ENCODE measurements at regions of chr13 and their contacts with region 1.

Region 1: DNA sequence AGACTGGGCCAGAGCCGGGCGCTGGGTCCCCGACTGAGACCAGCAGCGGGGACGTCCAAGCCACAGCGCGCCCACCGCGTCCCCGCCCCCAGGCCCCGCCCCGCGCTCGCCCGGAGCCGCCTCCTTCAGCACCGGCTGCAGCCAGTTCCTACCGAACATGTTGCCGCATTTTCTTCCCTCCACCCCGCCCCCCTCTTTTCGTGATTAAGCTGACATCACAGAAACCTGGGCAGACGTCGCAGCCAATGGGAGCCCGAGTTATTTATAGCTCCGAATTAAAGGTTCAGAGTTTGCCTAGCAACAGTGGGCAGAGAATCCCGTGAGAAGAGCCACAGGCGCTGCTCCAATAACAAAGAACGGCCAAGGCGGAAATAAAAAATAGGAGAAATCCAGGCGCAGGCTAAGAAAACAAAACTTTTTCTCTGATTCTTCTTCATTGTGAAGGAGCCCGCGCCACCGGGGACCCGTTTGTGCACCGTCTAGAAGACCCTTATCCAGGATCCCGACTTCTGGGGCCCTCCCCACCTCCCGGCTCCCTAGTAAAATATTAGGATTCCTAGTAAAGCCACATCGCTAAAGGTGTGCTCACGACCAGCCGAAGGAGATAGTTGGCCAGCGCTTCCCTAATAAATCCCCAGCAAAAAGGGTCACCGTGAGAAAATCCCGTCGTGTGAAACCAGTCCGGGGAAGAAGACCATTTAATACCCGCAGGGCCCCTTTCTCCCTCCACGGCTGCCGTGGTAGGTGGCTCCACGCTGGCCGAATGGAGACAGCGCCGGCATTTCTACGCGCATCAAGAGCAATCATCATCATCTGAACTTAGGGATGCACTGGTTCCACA is 61.7 kb downstream of the SERP2 start:
- DNase-seq: peak; percentile 93
- ATAC-seq: peak; percentile 41
- H3K4me3 ChIP-seq: peak overlapping the region; percentile 100
- H3K27ac ChIP-seq: peak overlapping the region; percentile 90
- H3K4me1 ChIP-seq: peaks cover 22% of the 10 kb centered on the region
- H3K27me3 ChIP-seq: no peaks in the 10 kb centered on the region
- CTCF ChIP-seq: no peak

Region 2: GRCh38 chr13:44141725-44142539 is 293.4 kb before region 1 on chr13:
- CTCF ChIA-PET with region 1: interaction called, 6 read pairs
- POLR2A ChIA-PET with region 1: interaction called, 5 read pairs
- intact Hi-C with region 1: loop called (anchors 2 kb)
- DNase-seq: peak; percentile 93
- ATAC-seq: peak; percentile 95
- H3K4me3 ChIP-seq: peak overlapping the region; percentile 75
- H3K27ac ChIP-seq: peak overlapping the region; percentile 84
- H3K4me1 ChIP-seq: peaks cover 29% of the 10 kb centered on the region
- H3K27me3 ChIP-seq: no peaks in the 10 kb centered on the region
- CTCF ChIP-seq: no peak

Region 3: DNA sequence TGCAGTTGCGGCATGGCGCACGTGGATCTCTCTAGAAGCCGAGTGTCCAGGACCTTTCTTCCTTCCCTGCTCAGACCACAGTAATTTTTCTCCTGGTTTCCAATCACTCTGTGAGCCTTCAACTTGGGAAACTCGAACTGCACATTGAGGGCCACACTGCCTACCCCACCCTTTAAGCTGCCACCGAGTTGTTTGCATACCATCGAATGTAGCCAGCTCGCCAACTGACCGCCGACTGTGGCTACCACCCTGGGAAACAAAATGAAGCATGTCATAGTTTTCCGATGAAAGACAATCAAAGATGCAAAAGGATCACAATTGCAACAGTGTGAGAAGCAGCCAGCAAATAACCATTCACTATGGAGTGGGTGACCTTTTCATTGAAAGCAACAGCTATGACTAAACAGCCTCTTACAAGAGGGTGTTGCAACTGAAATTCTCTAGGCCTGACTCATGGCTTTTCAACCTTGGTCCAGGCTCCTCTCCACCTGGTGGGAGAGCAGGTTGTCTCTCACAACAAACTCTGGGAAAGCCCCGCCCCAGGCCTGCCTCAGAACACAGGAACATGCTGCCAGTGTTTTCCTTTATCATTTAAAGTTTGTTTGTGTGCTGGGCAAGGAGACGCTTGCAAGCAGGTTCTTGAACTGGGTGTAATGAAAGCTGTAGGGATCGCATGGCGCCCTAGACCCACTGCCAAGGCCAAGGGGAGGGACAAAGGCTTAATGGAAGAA is 203.4 kb before region 1 on chr13:
- CTCF ChIA-PET with region 1: no interaction called
- POLR2A ChIA-PET with region 1: interaction called, 11 read pairs
- intact Hi-C with region 1: loop called (anchors 1 kb)
- DNase-seq: peak; percentile 97
- ATAC-seq: peak; percentile 84
- H3K4me3 ChIP-seq: no peak overlapping the region
- H3K27ac ChIP-seq: peak overlapping the region; percentile 100
- H3K4me1 ChIP-seq: peaks cover 42% of the 10 kb centered on the region
- H3K27me3 ChIP-seq: no peaks in the 10 kb centered on the region
- CTCF ChIP-seq: no peak

Region 4: DNA sequence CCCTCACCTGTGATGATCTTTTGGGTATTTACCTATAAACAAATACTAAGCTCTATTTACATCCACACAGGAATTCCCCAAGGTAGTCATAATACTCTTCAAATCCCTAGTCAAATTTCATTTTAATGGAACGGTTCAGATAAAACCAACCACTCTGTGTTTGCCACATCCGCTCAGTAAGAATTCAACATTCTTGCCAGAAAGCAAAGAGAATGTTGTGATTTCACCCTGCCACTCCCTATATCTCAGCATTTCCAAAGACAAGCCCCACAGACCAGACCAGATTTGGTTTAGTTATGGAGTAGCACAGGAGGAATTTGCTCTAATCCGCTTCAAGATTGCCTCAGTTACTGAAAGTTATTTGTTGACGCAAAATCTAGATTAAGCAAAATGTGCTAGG is 167.4 kb before region 1 on chr13:
- CTCF ChIA-PET with region 1: interaction called, 4 read pairs
- POLR2A ChIA-PET with region 1: interaction called, 22 read pairs
- intact Hi-C with region 1: no loop called
- DNase-seq: peak; percentile 91
- ATAC-seq: peak; percentile 83
- H3K4me3 ChIP-seq: no peak overlapping the region
- H3K27ac ChIP-seq: peak overlapping the region; percentile 95
- H3K4me1 ChIP-seq: peaks cover 43% of the 10 kb centered on the region
- H3K27me3 ChIP-seq: no peaks in the 10 kb centered on the region
- CTCF ChIP-seq: no peak

Region 5: DNA sequence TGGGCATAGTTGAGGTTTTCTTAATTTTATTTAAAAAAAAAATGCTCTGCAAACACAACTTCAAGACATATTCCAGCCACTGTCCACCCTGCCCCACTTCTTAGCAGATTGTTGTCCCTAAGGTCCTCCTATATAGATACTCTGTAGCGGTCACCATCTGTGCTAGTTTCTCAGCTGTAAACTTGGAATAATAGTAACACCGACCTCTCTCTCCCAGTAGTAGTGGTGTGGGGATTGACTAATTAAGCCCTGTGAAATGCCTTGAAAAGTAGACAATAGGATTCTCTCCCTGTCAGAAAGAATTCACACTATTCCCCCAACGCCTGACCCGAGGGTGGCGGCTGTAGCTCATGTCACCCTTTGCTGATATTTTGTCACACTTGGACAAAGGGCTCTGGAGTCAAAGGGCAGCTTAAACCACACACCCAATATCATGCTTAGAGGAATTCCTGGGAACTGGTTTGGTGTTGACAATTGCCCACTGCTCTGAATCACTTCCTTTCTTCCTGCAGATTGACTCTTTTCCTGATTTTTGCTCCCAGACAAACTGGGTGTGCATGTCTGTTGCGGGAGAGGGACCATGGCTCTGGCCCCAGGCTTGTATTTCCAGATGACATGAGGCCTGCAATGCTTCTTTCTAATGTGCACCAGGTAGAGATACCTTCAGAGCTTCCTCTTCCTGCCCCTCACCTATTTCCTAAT is 70.9 kb before region 1 on chr13:
- CTCF ChIA-PET with region 1: interaction called, 3 read pairs
- POLR2A ChIA-PET with region 1: interaction called, 21 read pairs
- intact Hi-C with region 1: loop called (anchors 2 kb)
- DNase-seq: peak; percentile 91
- ATAC-seq: peak; percentile 74
- H3K4me3 ChIP-seq: no peak overlapping the region
- H3K27ac ChIP-seq: peak overlapping the region; percentile 95
- H3K4me1 ChIP-seq: peaks cover 70% of the 10 kb centered on the region
- H3K27me3 ChIP-seq: no peaks in the 10 kb centered on the region
- CTCF ChIP-seq: no peak

Region 6: DNA sequence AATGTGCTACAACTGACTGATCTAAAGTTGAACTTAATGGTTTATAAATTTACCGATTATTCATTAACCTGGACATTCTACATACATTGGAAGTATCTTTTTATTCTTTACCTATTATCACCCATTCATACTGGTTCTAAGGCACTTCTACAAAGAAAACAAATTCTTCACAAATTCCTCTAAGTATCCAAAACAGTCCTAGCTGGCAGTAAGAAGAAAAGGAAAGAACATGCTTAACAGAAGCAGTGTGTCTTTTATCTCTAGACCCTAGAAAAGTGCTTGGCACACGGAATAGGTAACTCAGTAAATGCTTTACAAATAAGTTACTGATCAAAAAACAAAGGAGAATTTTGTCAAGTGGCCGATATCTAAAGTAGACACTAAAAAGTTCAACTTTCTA is 108.0 kb after region 1 on chr13:
- CTCF ChIA-PET with region 1: no interaction called
- POLR2A ChIA-PET with region 1: interaction called, 26 read pairs
- intact Hi-C with region 1: no loop called
- DNase-seq: no peak
- ATAC-seq: no peak
- H3K4me3 ChIP-seq: no peak overlapping the region
- H3K27ac ChIP-seq: no peak overlapping the region
- H3K4me1 ChIP-seq: no peaks in the 10 kb centered on the region
- H3K27me3 ChIP-seq: no peaks in the 10 kb centered on the region
- CTCF ChIP-seq: no peak